Activated B cell treated with CpG ODN at 0.5 μM for 24 hours (primary cell): ENCODE measurements at regions of chrX and their contacts with region 1.

Region 1: DNA sequence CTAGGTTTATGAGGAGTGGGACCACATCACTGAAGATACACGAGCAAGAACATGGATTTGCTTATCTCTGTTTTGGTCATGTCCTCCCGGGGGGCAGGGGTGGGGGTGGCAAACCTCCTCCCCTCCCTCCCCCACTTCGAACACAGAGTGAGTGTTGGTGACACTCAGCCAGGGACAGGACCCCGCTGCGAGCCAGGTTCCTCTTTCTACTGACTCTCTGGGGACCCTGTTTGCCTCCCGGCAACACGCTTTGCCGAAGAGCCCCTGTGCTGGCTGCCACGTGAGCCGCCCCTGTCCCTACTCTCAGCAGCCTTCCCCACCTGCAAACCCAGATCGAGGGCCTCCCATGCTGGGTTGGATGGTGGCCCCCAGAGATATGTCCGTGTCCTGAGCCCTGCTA is 34.7 kb downstream of the P2RY8 start:
- DNase-seq: peak; percentile 73
- ATAC-seq: peak; percentile 85
- H3K4me3 Mint-ChIP-seq: peak overlapping the region; percentile 66
- H3K27ac Mint-ChIP-seq: no peak overlapping the region
- H3K4me1 Mint-ChIP-seq: peaks cover 25% of the 10 kb centered on the region
- H3K27me3 Mint-ChIP-seq: no peaks in the 10 kb centered on the region
- CTCF ChIP-seq: no peak

Region 2: DNA sequence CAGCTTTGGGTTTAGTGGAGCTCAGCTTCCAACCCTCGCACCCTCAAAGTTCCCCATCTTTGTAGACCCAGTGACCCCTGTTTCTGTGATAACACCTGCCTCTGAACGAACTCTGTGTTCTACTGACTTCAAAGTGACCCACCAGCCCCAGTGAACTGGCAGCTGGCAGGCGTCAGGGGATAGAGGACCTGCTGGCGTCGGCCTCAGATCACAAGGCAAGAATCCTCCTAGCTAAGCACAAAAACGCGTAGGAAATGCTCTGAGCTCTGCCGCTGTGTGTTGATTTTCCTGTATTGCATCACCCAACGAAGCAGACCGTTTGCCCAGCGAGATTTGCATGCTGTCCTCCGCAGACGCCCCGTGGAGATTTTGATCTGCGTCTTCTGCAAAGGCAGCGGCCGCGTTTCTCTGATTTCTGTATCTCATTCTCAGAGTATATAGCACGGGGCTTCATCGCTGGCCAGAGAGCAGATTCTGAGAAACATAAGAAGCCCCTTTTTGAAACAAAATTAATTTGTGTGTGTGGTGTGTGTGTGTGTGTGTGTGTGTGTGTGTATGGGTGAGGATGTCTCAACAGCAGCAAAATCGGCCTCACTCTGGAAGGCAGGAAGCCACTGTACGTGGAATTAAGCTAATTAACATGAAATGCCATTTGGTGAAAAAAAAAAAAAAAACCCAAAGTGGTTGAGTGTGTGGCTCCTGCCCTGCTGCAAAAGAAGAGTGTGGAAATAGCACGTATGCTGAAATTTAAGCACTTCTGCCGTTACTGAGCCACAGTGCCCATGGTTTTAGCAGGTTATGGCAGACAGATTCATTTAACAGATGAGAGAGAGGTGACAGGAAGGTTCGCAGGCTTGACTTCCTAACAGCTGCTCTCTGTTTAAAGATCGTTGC is 20.4 kb before region 1 on chrX:
- CTCF ChIA-PET with region 1: no interaction called
- POLR2A ChIA-PET with region 1: no interaction called
- intact Hi-C with region 1: loop called (anchors 1 kb)
- DNase-seq: peak; percentile 63
- ATAC-seq: peak; percentile 53
- H3K4me3 Mint-ChIP-seq: peak overlapping the region; percentile 81
- H3K27ac Mint-ChIP-seq: peak overlapping the region; percentile 97
- H3K4me1 Mint-ChIP-seq: peaks cover 90% of the 10 kb centered on the region
- H3K27me3 Mint-ChIP-seq: no peaks in the 10 kb centered on the region
- CTCF ChIP-seq: no peak

Region 3: DNA sequence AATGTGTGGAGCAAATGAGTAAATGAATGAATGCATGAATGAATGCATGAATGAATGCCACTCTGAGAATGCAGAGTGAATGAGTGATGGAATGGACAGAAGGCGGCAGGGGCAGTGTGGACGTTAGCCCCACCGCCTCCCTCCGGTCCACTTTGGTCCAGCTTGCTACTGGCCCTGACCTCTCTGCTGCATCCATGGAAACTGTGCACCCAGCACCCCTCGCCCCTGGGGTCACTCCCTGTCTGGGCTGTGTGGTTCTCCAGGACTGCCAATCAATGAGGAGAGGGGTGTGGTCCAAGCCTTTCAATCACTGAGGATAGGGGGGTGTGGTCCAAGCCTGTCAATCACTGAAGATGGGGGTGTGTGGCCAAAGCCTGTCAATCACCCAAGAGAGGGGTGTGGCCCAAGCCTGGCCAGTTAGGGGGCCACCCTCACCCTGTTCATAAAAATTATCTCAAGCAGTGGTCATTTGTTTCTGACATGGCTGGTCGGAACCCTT is 10.3 kb before region 1 on chrX:
- CTCF ChIA-PET with region 1: no interaction called
- POLR2A ChIA-PET with region 1: no interaction called
- intact Hi-C with region 1: loop called (anchors 1 kb)
- DNase-seq: peak; percentile 61
- ATAC-seq: peak; percentile 66
- H3K4me3 Mint-ChIP-seq: peak overlapping the region; percentile 88
- H3K27ac Mint-ChIP-seq: peak overlapping the region; percentile 88
- H3K4me1 Mint-ChIP-seq: peaks cover 69% of the 10 kb centered on the region
- H3K27me3 Mint-ChIP-seq: no peaks in the 10 kb centered on the region
- CTCF ChIP-seq: no peak

Region 4: GRCh38 chrX:1521459-1521956 is 19.3 kb after region 1 on chrX:
- CTCF ChIA-PET with region 1: no interaction called
- POLR2A ChIA-PET with region 1: no interaction called
- intact Hi-C with region 1: loop called (anchors 1 kb)
- DNase-seq: peak; percentile 66
- ATAC-seq: peak; percentile 85
- H3K4me3 Mint-ChIP-seq: peak overlapping the region; percentile 83
- H3K27ac Mint-ChIP-seq: peak overlapping the region; percentile 97
- H3K4me1 Mint-ChIP-seq: peaks cover 64% of the 10 kb centered on the region
- H3K27me3 Mint-ChIP-seq: no peaks in the 10 kb centered on the region
- CTCF ChIP-seq: no peak